SK-N-SH (cell line): ENCODE measurements at regions of chr1 and their contacts with region 1.

Region 1: DNA sequence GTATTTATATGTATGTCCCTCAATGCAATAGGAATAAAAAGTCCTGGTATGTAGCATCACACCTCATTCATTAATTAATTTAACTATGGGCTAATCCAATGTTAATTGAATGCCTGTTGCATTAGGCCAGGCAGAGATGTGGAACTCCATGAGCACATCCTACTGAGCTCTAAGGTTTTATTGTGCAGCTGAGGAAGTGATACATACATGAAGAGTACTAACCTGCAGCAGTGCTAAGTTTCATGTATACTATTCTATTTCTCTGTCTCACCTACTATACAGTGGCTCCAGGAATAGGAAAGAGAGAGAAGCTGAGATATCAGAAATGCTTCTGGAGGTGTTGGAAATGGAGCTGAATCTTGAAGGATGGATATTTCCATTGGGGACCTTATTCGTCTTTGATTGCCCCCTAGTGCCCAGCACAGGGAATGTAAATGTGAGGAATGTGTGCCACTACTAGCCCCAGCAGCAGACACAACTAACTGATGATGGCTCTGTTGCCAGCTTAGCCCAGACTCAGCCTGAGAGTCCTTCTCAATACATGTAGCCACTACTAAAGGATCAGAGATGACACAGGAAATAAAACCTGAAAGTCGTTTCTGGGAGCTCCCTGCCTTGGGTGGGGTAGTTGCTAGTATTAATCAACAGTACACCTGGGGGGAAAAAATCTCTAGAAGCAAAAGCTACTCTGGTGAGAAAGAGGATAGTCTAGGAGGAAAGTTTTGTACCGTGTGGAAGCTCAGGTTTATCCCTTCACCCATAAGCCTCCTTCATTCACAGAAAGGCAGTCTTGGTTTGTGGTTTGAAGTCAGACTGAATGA is 173.3 kb upstream of the FOXD3 start:
- DNase-seq: peak; percentile 41
- H3K4me3 ChIP-seq: no peak overlapping the region; a peak in 1 of 4 replicates
- H3K27ac ChIP-seq: no peak overlapping the region
- H3K4me1 ChIP-seq: no peaks in the 10 kb centered on the region
- H3K27me3 ChIP-seq: no peaks in the 10 kb centered on the region
- CTCF ChIP-seq: peak; percentile 78
- EP300 ChIP-seq: no peak
- RAD21 ChIP-seq: peak; percentile 79

Region 2: GRCh38 chr1:62962901-62963776 is 185.9 kb before region 1 on chr1:
- CTCF ChIA-PET with region 1: interaction called, 15 read pairs
- POLR2A ChIA-PET with region 1: no interaction called
- DNase-seq: peak; percentile 66
- H3K4me3 ChIP-seq: no peak overlapping the region; a peak in 1 of 4 replicates
- H3K27ac ChIP-seq: no peak overlapping the region
- H3K4me1 ChIP-seq: peaks cover 0 to 3% of the 10 kb centered on the region in 2 experiments; a peak in 3 of 4 replicates
- H3K27me3 ChIP-seq: no peaks in the 10 kb centered on the region
- CTCF ChIP-seq: peak; percentile 57
- EP300 ChIP-seq: no peak
- RAD21 ChIP-seq: peak; percentile 74

Region 3: DNA sequence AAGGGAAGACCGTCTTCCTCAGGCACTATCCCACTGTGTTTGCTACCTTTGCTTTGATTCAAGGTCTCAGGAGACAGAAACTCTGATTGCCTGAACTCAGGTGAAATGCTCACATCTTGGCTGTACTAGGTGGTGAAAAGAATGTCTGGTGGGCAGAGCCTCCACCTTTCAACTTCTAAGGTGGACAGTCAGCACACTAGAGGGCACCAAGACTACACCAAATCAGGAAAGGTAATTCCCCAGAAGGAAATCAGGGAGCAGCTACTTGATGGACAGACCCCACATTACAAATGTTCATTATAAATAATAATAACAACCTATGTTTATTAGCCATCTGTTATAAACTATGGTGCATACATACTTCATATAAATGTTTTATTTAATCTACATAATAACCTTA is 144.2 kb before region 1 on chr1:
- CTCF ChIA-PET with region 1: interaction called, 12 read pairs
- POLR2A ChIA-PET with region 1: no interaction called
- DNase-seq: peak; percentile 37
- H3K4me3 ChIP-seq: no peak overlapping the region
- H3K27ac ChIP-seq: no peak overlapping the region
- H3K4me1 ChIP-seq: peaks cover 0 to 2% of the 10 kb centered on the region in 2 experiments; a peak in 1 of 4 replicates
- H3K27me3 ChIP-seq: no peaks in the 10 kb centered on the region
- CTCF ChIP-seq: peak; percentile 47
- EP300 ChIP-seq: no peak
- RAD21 ChIP-seq: peak; percentile 74

Region 4: DNA sequence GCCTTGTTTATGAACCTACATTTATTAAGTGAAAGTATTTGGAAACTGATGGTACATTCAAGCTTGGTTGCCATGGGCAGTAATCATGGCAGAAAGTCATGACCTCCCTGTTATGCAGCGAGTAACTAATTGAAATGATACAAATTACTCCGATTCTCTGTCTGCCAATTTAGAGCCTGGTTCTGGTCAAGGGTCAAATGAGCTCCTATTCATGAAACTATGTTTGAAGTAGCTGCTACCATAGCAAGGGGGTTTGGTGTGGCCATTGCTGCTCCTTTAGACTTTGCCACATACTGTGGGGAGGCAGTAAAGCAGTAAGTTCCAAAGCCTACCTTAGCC is 13.9 kb before region 1 on chr1:
- CTCF ChIA-PET with region 1: interaction called, 11 read pairs
- POLR2A ChIA-PET with region 1: no interaction called
- DNase-seq: no peak
- H3K4me3 ChIP-seq: no peak overlapping the region
- H3K27ac ChIP-seq: no peak overlapping the region
- H3K4me1 ChIP-seq: no peaks in the 10 kb centered on the region
- H3K27me3 ChIP-seq: 0 out of 2 replicates have a peak, but pooled peaks cover 5% of the 10 kb centered on the region
- CTCF ChIP-seq: no peak
- EP300 ChIP-seq: no peak
- RAD21 ChIP-seq: no peak

Region 5: DNA sequence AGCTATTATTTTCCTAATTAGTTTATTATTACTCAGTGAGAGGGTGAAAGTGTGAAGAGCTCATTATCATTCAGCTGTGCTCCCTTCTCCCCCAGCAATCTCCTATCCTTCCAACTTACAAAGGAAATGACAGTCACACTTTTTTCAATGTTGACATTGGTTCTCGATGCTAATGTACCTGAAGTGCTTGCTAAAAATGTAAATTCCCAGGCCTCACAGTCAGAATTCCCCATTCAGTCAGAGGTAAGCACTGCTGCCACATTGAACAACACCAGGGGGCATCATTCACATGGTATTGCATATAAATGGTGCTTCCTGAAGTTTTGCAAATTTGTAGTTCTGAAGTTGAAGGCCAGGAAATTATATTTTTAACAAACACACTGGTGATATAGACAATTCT is 40.6 kb after region 1 on chr1:
- CTCF ChIA-PET with region 1: interaction called, 11 read pairs
- POLR2A ChIA-PET with region 1: no interaction called
- DNase-seq: peak; percentile 14
- H3K4me3 ChIP-seq: 0 out of 4 replicates have a peak overlapping the region, but pooled peaks of 1 of the 2 experiments have one; percentile 43
- H3K27ac ChIP-seq: no peak overlapping the region
- H3K4me1 ChIP-seq: no peaks in the 10 kb centered on the region
- H3K27me3 ChIP-seq: no peaks in the 10 kb centered on the region
- CTCF ChIP-seq: peak; percentile 44; the same call in 1 of the 2 replicates
- EP300 ChIP-seq: no peak
- RAD21 ChIP-seq: peak; percentile 49